ENCODE measurements at regions of chr1 and their contacts with region 1.

Region 1: GRCh38 chr1:198681831-198682759 is 43.3 kb downstream of the PTPRC start:
- DNase-seq: peak; percentile 28 to 96 (median 92)
- ATAC-seq: peak; percentile 89
- H3K4me3 ChIP-seq: peak overlapping the region; percentile 51
- H3K4me3 Mint-ChIP-seq: peak overlapping the region; percentile 74 to 87 (median 77)
- H3K27ac ChIP-seq: peak overlapping the region; percentile 92
- H3K27ac Mint-ChIP-seq: peak overlapping the region; percentile 90 to 99 (median 98)
- H3K4me1 ChIP-seq: peaks cover 88 to 90% of the 10 kb centered on the region in 2 donors
- H3K4me1 Mint-ChIP-seq: peaks cover 53 to 94% (median 81%) of the 10 kb centered on the region in 7 donors
- H3K27me3 ChIP-seq: no peaks in the 10 kb centered on the region
- H3K27me3 Mint-ChIP-seq: peaks cover 0 to 2% (median 0%) of the 10 kb centered on the region in 5 donors

Region 2: GRCh38 chr1:197744979-197745378 is 937.1 kb before region 1 on chr1:
- CTCF ChIA-PET with region 1: no interaction called
- POLR2A ChIA-PET with region 1: no interaction called
- intact Hi-C with region 1: no loop called
- DNase-seq: no peak
- ATAC-seq: no peak
- H3K4me3 ChIP-seq: no peak overlapping the region
- H3K4me3 Mint-ChIP-seq: peak overlapping the region in 2 of 10 donors; percentile 16 to 38
- H3K27ac ChIP-seq: no peak overlapping the region
- H3K27ac Mint-ChIP-seq: peak overlapping the region in 1 of 9 donors; percentile 5
- H3K4me1 ChIP-seq: peaks cover 0 to 7% of the 10 kb centered on the region in 2 donors
- H3K4me1 Mint-ChIP-seq: peaks cover 35 to 85% (median 69%) of the 10 kb centered on the region in 7 donors
- H3K27me3 ChIP-seq: no peaks in the 10 kb centered on the region
- H3K27me3 Mint-ChIP-seq: no peaks in the 10 kb centered on the region

Region 3: DNA sequence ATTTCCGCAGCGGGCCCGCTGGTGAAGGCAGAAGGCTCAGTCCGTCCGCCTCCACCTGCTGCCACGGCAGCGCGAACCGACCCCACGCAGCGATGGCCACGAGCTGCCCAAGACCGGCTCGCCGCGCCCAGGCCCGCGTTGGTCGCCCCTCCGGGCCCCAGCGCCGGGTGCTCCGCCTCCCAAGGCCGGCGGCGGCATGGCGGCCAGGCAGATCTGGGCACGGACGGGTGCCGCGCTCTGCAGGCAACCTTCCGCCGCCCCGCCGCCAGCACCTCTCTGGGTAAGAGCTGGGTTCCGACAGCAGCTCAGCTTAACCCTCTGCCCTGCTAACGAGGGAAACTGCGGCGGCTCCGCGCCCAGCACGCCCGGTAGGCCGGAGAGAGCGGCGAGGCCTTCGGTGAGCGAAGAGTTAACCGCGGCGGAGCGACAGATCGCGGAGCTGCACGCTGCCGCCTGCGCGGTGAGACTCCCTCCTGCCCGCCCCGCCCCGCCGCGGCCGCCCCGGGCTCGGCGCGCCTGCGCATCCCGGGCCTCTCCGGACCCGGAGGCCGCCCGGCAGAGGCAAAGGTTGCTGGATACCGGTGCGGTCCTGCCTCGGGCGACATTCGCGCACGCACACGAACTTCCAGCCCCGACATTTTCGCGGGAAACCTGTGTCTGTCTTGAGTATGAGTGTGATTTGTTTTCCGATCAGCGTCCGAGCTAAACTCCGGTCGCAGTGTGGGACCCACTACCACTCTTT is 779.5 kb before region 1 on chr1 and contains the start of gene C1orf53:
- CTCF ChIA-PET with region 1: no interaction called
- POLR2A ChIA-PET with region 1: no interaction called
- intact Hi-C with region 1: loop called in 1 of 2 experiments (anchors 10 kb)
- DNase-seq: peak; percentile 58 to 87 (median 74)
- ATAC-seq: peak; percentile 94
- H3K4me3 ChIP-seq: peak within 1 kb of the TSS; percentile 71
- H3K4me3 Mint-ChIP-seq: peak within 1 kb of the TSS; percentile 79 to 97 (median 92)
- H3K27ac ChIP-seq: peak within 1 kb of the TSS; percentile 50
- H3K27ac Mint-ChIP-seq: peak within 1 kb of the TSS; percentile 7 to 82 (median 79)
- H3K4me1 ChIP-seq: peaks cover 4% of the 10 kb centered on the region in 2 donors
- H3K4me1 Mint-ChIP-seq: peaks cover 6 to 19% (median 14%) of the 10 kb centered on the region in 7 donors
- H3K27me3 ChIP-seq: peaks cover 0 to 23% of the 10 kb centered on the region in 2 donors
- H3K27me3 Mint-ChIP-seq: peaks cover 46 to 68% (median 54%) of the 10 kb centered on the region in 5 donors
- total RNA-seq, gene C1orf53: not detected

Region 4: GRCh38 chr1:198359024-198359653 is 323.0 kb before region 1 on chr1:
- CTCF ChIA-PET with region 1: interaction called, 3 read pairs
- POLR2A ChIA-PET with region 1: no interaction called
- intact Hi-C with region 1: loop called (anchors 5 kb)
- DNase-seq: peak in 5 of 9 donors; percentile 3 to 17 (median 7)
- ATAC-seq: no peak
- H3K4me3 ChIP-seq: no peak overlapping the region
- H3K4me3 Mint-ChIP-seq: no peak overlapping the region
- H3K27ac ChIP-seq: no peak overlapping the region
- H3K27ac Mint-ChIP-seq: no peak overlapping the region
- H3K4me1 ChIP-seq: no peaks in the 10 kb centered on the region
- H3K4me1 Mint-ChIP-seq: peaks cover 0 to 3% (median 0%) of the 10 kb centered on the region in 7 donors
- H3K27me3 ChIP-seq: no peaks in the 10 kb centered on the region
- H3K27me3 Mint-ChIP-seq: peaks cover 0 to 21% (median 3%) of the 10 kb centered on the region in 5 donors

Region 5: DNA sequence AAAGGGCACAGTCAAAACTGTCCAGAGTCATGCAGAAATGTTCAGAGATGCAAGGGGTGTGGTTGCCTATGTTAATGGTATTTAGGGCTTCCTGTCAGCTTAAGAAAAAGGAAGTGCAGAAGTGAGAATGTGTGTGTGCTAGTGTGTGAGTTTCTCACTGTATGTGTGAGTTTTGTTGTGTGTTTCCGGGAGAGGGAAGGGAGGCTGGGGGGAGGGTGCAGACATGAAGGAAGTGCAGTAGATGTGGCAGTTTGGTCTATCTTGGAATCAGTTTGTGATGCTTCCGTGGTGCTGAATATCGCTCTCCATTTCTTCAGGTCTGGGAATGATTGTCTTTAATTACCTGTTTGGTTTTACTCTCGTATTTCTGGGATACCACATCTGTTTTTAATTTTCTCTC is 125.1 kb before region 1 on chr1:
- CTCF ChIA-PET with region 1: interaction called, 3 read pairs
- POLR2A ChIA-PET with region 1: interaction called, 8 read pairs
- intact Hi-C with region 1: loop called in 1 of 2 experiments (anchors 1 kb)
- DNase-seq: peak; percentile 12 to 90 (median 82)
- ATAC-seq: peak; percentile 95
- H3K4me3 ChIP-seq: peak overlapping the region; percentile 21
- H3K4me3 Mint-ChIP-seq: peak overlapping the region; percentile 63 to 89 (median 74)
- H3K27ac ChIP-seq: peak overlapping the region; percentile 59
- H3K27ac Mint-ChIP-seq: peak overlapping the region; percentile 51 to 95 (median 87)
- H3K4me1 ChIP-seq: peaks cover 65 to 71% of the 10 kb centered on the region in 2 donors
- H3K4me1 Mint-ChIP-seq: peaks cover 52 to 94% (median 89%) of the 10 kb centered on the region in 7 donors
- H3K27me3 ChIP-seq: no peaks in the 10 kb centered on the region
- H3K27me3 Mint-ChIP-seq: no peaks in the 10 kb centered on the region

Region 6: GRCh38 chr1:198633675-198634121 is 48.4 kb before region 1 on chr1:
- CTCF ChIA-PET with region 1: interaction called, 6 read pairs
- POLR2A ChIA-PET with region 1: interaction called, 104 read pairs
- intact Hi-C with region 1: no loop called
- DNase-seq: no peak
- ATAC-seq: peak; percentile 68
- H3K4me3 ChIP-seq: peak overlapping the region; percentile 3
- H3K4me3 Mint-ChIP-seq: peak overlapping the region in 9 of 10 donors; percentile 15 to 83 (median 43)
- H3K27ac ChIP-seq: no peak overlapping the region
- H3K27ac Mint-ChIP-seq: peak overlapping the region; percentile 60 to 98 (median 85)
- H3K4me1 ChIP-seq: peaks cover 70 to 86% of the 10 kb centered on the region in 2 donors
- H3K4me1 Mint-ChIP-seq: peaks cover 64 to 95% (median 84%) of the 10 kb centered on the region in 7 donors
- H3K27me3 ChIP-seq: no peaks in the 10 kb centered on the region
- H3K27me3 Mint-ChIP-seq: no peaks in the 10 kb centered on the region

Region 7: DNA sequence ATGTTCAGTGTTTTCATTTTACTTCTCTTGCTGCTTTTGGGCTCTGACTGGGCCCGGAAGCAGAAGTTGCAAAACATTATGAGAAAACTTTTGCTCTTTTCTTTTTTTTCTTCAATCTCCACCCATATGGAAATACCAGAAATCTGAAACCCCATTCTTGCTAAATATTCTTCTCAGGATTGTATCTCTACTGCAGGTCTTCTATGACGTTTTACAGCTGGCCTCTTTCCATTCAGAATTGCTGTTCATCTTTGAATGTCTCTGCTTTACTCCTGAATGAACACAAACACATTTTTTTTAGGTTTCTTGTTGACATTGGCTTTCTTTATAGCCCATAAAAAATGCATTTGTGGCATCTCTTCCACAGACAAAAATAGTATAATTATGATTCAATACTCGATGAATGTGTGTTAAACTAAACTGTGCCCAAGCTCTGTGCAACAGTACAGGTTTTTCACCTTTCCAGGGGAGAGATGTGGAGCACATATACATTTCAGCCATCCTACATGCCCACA is 24.5 kb before region 1 on chr1:
- CTCF ChIA-PET with region 1: interaction called, 7 read pairs
- POLR2A ChIA-PET with region 1: interaction called, 143 read pairs
- intact Hi-C with region 1: loop called (anchors 1 kb)
- DNase-seq: peak in 6 of 9 donors; percentile 59 to 83 (median 70)
- ATAC-seq: peak; percentile 65
- H3K4me3 ChIP-seq: peak overlapping the region; percentile 40
- H3K4me3 Mint-ChIP-seq: peak overlapping the region; percentile 49 to 87 (median 82)
- H3K27ac ChIP-seq: peak overlapping the region; percentile 94
- H3K27ac Mint-ChIP-seq: peak overlapping the region; percentile 90 to 99 (median 97)
- H3K4me1 ChIP-seq: peaks cover 65 to 78% of the 10 kb centered on the region in 2 donors
- H3K4me1 Mint-ChIP-seq: peaks cover 36 to 90% (median 73%) of the 10 kb centered on the region in 7 donors
- H3K27me3 ChIP-seq: no peaks in the 10 kb centered on the region
- H3K27me3 Mint-ChIP-seq: no peaks in the 10 kb centered on the region

Region 8: DNA sequence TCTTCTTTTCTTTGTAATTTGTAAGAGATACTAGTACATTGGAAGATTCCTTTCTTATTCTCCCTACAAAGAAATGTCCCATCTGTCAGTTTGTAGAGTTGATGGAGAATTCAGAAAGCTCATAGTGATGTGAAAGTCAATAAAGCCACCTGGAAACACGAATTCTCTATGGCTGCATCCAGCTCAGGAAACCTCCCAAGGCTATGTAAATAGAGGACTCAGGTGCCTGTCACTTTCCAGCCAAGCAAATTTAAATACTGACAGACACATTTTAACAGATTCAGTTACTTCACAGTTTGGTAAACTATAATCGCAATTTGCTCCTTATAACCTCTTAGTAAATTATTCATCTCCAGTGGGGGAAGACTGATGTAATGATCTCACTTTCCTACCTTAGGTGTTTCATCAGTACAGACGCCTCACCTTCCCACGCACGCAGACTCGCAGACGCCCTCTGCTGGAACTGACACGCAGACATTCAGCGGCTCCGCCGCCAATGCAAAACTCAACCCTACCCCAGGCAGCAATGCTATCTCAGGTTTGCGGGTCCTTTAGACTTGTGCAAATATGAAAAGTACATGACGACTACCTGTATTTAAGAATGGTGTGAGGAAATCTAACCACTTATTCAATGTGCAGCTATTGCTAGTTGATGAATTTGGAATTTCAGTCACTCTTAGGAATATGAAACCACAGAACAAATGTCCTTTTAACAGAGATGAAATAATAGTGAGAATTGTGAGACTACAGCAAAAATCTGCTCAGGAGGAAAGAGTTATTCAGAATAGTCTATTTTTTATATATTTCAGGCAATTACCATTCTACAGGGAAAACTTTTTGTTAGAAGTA is 17.3 kb after region 1 on chr1:
- CTCF ChIA-PET with region 1: interaction called, 6 read pairs
- POLR2A ChIA-PET with region 1: interaction called, 9 read pairs
- intact Hi-C with region 1: loop called in 1 of 2 experiments (anchors 2 kb)
- DNase-seq: peak; percentile 34 to 68 (median 64)
- ATAC-seq: peak; percentile 84
- H3K4me3 ChIP-seq: no peak overlapping the region
- H3K4me3 Mint-ChIP-seq: peak overlapping the region; percentile 13 to 68 (median 40)
- H3K27ac ChIP-seq: peak overlapping the region; percentile 46
- H3K27ac Mint-ChIP-seq: peak overlapping the region; percentile 50 to 93 (median 87)
- H3K4me1 ChIP-seq: peaks cover 42 to 52% of the 10 kb centered on the region in 2 donors
- H3K4me1 Mint-ChIP-seq: peaks cover 46 to 97% (median 88%) of the 10 kb centered on the region in 7 donors
- H3K27me3 ChIP-seq: no peaks in the 10 kb centered on the region
- H3K27me3 Mint-ChIP-seq: no peaks in the 10 kb centered on the region

Region 9: DNA sequence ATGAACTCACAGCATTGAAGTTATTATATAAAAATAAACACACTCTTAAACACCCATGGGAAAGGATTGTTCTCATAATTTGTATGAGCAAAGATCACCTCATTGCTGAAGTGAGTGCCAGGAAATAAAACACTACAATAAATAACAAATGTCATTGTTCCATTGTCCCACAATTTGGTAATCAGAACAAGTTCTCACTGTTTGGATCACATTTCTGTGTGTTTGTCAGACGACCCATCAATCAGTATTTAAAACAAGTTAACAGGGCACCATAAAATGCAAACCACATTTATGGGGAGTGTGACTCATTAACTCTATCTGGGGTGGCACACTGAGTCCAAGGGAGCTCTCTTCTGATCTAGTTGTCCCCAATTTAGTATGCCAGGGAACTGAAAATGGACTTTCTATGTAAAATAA is 81.2 kb after region 1 on chr1:
- CTCF ChIA-PET with region 1: no interaction called
- POLR2A ChIA-PET with region 1: no interaction called
- intact Hi-C with region 1: no loop called
- DNase-seq: no peak
- ATAC-seq: no peak
- H3K4me3 ChIP-seq: no peak overlapping the region
- H3K4me3 Mint-ChIP-seq: no peak overlapping the region
- H3K27ac ChIP-seq: no peak overlapping the region
- H3K27ac Mint-ChIP-seq: peak overlapping the region in 1 of 9 donors; percentile 62
- H3K4me1 ChIP-seq: peaks cover 0 to 8% of the 10 kb centered on the region in 2 donors
- H3K4me1 Mint-ChIP-seq: peaks cover 11 to 51% (median 47%) of the 10 kb centered on the region in 7 donors
- H3K27me3 ChIP-seq: no peaks in the 10 kb centered on the region
- H3K27me3 Mint-ChIP-seq: no peaks in the 10 kb centered on the region